ENCODE measurements at regions of chr1 and their contacts with region 1.

Region 1: DNA sequence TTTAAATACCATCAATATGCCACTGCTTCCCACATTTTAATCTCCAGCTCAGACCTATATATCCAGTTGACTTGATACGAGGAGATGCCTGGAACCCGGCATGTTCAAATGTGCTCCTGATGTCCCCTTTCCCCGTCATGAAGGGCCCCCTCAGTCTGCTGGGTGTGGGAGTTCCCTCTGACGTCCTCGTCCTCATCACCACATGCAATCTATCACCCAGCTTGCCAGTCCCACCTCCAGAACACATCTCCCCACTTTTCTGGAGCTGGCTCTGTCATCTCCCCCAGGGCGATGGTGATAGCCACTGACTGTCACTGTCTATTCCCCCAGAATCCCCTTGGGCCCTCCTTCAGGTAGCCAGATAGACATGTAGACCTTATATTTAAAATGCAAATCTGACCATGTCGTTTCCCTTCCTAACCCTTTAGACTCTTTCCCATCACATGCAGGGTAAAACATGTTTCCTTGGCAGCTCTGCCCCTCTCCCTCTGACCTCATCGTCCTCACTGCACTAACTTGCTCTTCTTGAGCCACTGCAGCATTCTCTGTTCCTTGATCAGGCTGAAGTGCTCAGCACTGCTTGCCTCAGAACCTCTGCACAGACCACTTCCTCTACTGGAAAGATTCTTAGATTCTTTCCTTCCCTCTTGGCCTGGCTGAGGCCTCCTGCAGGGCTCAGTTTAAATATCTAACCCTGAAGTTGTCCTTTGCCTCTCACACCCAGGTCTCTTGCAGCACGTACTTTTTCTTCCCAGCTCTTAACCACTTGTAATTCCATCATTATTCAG is 7.4 kb downstream of the AZIN2 start:
- DNase-seq: no peak
- ATAC-seq: peak; percentile 91
- H3K4me3 Mint-ChIP-seq: peak overlapping the region; percentile 67
- H3K27ac Mint-ChIP-seq: peak overlapping the region; percentile 90
- H3K4me1 Mint-ChIP-seq: peaks cover 50% of the 10 kb centered on the region
- H3K27me3 Mint-ChIP-seq: no peaks in the 10 kb centered on the region

Region 2: DNA sequence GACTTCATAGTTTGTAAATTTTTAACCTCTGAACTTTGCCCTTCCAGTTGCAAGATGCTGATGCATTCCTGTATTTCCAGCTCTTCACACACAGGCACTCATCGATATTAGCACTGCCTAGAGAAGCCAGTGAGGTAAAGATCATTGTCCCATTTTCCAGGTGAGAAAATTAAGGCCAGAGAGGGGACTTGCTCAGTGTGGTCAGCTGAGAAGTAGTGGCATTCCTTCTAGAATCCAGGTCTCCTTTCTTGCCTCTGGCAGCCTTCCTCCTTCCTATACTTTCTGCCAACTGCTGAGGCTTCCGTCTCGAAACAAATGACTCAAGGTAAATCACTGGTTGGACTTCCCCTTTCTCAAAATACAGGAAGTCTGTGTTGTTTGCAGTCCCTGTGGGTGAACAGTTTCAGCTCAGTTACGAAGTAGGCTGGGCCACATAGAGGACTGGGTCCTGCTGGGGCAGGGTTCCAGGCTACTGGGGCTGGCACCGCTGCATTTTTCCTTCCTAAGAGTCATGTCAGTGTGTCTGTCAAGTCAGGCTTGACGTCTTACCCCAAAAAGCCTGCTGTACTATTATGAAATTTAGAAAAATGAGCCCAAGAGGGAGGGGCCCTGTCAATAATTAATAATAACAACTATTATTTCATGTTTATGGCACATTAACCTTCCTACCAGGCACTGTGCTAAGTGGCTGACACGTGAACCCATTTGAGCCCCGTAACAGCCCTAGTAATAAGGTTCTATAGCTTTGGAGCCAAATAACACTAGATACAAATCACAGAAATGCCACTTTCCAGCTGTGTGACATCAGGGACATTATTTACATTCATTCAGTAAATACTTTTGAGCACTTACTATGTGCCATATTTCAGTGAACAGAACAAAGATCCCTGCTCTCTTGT is 107.1 kb before region 1 on chr1:
- POLR2A ChIA-PET with region 1: no interaction called
- DNase-seq: no peak
- ATAC-seq: peak; percentile 98
- H3K4me3 Mint-ChIP-seq: peak overlapping the region; percentile 78
- H3K27ac Mint-ChIP-seq: peak overlapping the region; percentile 93
- H3K4me1 Mint-ChIP-seq: peaks cover 35% of the 10 kb centered on the region
- H3K27me3 Mint-ChIP-seq: peaks cover 3% of the 10 kb centered on the region

Region 3: GRCh38 chr1:33043267-33044092 is 44.8 kb before region 1 on chr1:
- POLR2A ChIA-PET with region 1: no interaction called
- DNase-seq: no peak
- ATAC-seq: no peak
- H3K4me3 Mint-ChIP-seq: no peak overlapping the region
- H3K27ac Mint-ChIP-seq: no peak overlapping the region
- H3K4me1 Mint-ChIP-seq: peaks cover 22% of the 10 kb centered on the region
- H3K27me3 Mint-ChIP-seq: peaks cover 12% of the 10 kb centered on the region

Region 4: DNA sequence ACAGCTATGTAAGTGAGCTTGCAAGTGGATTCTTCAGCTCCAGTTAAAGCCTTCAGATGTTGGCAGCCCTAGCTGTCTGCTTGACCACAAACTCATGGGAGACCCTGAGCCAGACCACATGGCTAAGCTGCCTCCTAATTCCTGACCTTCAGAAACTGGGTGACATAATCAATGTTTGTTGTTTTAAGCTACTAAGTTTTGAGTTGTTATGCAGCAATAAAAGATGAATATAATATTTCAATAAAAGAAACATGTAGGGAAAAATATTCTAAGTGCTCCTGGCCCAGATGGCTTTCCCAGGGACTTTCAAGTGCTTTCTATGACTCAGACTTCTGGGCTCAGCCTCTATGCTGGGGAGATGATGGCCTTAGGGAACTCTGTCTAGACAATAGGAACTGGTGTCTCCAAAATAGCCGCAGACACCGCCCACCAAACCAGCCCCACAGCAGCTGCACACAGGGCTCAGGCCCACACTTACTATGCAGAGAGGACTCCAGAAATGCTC is 27.7 kb before region 1 on chr1:
- POLR2A ChIA-PET with region 1: no interaction called
- DNase-seq: no peak
- ATAC-seq: no peak
- H3K4me3 Mint-ChIP-seq: no peak overlapping the region
- H3K27ac Mint-ChIP-seq: no peak overlapping the region
- H3K4me1 Mint-ChIP-seq: peaks cover 1% of the 10 kb centered on the region
- H3K27me3 Mint-ChIP-seq: peaks cover 8% of the 10 kb centered on the region

Region 5: DNA sequence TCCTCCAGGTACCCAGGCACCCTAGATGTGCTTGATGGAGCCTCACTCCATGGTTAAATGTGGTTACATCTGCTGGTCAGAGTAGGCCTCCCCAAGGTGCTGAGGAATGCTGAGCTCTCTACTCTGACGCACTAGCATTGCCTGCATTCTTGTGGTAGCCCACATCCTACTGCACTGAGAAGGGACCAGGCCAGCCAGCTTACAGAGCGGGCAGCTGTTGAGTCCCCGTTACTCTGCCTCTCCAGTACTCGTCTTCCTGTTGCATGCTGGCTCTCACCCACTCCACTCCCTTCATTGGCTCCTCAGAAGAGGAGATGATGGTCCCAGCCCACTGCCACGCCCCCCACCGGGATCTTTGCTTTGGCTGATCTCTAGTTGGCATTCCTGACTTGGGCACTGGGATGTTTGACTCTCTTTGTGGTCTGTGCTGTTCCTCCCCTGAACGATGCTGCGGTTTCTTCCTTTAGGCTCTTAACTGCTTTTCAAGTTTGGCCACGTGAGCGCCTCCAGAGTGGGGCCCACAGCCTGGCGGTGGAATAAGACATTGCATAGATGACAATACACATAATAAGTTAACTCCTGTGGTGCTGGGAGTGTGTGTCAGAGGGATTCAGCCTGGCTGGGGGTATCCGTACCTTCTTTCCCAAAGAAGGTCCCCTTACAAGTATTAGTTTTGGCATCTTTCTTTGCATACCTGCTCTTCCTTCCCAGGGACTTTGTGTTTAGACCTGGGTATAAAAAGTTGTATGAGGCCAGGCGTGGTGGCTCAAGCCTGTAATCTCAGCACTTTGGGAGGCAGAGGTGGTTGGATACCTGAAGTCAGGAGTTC is 11.2 kb after region 1 on chr1:
- POLR2A ChIA-PET with region 1: interaction called, 31 read pairs
- DNase-seq: peak; percentile 82
- ATAC-seq: peak; percentile 98
- H3K4me3 Mint-ChIP-seq: peak overlapping the region; percentile 84
- H3K27ac Mint-ChIP-seq: peak overlapping the region; percentile 97
- H3K4me1 Mint-ChIP-seq: peaks cover 58% of the 10 kb centered on the region
- H3K27me3 Mint-ChIP-seq: no peaks in the 10 kb centered on the region